Aorta (tissue), 5 donors: ENCODE measurements at regions of chr14 and their contacts with region 1.

Region 1: GRCh38 chr14:105212541-105213300 is 31.6 kb upstream of the NUDT14 start:
- DNase-seq: no peak
- ATAC-seq: no peak
- H3K4me3 ChIP-seq: no peak overlapping the region
- H3K27ac ChIP-seq: no peak overlapping the region
- H3K4me1 ChIP-seq: no peaks in the 10 kb centered on the region
- H3K27me3 ChIP-seq: no peaks in the 10 kb centered on the region

Region 2: DNA sequence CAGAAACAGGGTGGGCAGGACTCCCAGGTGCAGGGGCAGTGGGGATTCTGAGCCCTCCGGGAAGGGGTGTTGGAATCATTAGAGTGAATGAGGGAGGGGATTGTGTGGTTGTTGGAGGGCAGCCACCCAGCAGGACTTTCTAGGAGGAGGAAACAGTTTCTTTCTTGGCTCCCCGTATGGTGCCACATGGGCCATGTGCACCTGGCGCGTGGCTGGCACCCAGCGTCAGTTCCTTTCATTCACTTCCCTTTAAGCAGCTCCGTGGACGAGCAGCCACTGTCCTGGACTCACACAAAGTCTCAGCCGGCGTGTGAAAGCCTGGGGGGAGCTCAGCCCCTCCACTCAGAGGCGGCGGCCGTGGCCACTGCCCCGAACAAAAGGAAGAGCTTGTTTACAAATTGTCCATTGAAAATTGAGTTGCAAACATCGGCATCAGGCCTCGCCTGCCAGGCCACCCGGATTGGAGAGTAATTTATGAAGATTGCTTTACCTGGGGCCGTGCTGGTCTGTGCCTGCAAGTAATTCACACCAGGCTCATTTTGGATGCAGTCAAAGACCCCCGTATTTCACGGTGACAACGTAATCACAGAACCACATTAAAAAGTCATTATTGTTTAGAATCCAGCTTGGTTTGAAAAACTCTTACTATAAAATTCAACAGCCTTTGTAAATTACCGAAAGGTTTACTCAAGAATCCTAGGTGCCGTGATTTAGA is 734.9 kb before region 1 on chr14:
- intact Hi-C with region 1: no loop called
- DNase-seq: no peak
- ATAC-seq: no peak
- H3K4me3 ChIP-seq: no peak overlapping the region
- H3K27ac ChIP-seq: no peak overlapping the region
- H3K4me1 ChIP-seq: no peaks in the 10 kb centered on the region
- H3K27me3 ChIP-seq: peaks cover 0 to 2% of the 10 kb centered on the region in 2 donors

Region 3: GRCh38 chr14:105257464-105257863 is 44.7 kb after region 1 on chr14:
- intact Hi-C with region 1: loop called (anchors 2 to 10 kb)
- DNase-seq: no peak
- ATAC-seq: no peak
- H3K4me3 ChIP-seq: no peak overlapping the region
- H3K27ac ChIP-seq: no peak overlapping the region
- H3K4me1 ChIP-seq: no peaks in the 10 kb centered on the region
- H3K27me3 ChIP-seq: no peaks in the 10 kb centered on the region

Region 4: GRCh38 chr14:105267820-105268548 is 55.3 kb after region 1 on chr14:
- intact Hi-C with region 1: loop called in 1 of 2 experiments (anchors 10 kb)
- DNase-seq: no peak
- ATAC-seq: no peak
- H3K4me3 ChIP-seq: no peak overlapping the region
- H3K27ac ChIP-seq: no peak overlapping the region
- H3K4me1 ChIP-seq: no peaks in the 10 kb centered on the region
- H3K27me3 ChIP-seq: no peaks in the 10 kb centered on the region